ENCODE measurements at regions of chr4 and their contacts with region 1.

Region 1: DNA sequence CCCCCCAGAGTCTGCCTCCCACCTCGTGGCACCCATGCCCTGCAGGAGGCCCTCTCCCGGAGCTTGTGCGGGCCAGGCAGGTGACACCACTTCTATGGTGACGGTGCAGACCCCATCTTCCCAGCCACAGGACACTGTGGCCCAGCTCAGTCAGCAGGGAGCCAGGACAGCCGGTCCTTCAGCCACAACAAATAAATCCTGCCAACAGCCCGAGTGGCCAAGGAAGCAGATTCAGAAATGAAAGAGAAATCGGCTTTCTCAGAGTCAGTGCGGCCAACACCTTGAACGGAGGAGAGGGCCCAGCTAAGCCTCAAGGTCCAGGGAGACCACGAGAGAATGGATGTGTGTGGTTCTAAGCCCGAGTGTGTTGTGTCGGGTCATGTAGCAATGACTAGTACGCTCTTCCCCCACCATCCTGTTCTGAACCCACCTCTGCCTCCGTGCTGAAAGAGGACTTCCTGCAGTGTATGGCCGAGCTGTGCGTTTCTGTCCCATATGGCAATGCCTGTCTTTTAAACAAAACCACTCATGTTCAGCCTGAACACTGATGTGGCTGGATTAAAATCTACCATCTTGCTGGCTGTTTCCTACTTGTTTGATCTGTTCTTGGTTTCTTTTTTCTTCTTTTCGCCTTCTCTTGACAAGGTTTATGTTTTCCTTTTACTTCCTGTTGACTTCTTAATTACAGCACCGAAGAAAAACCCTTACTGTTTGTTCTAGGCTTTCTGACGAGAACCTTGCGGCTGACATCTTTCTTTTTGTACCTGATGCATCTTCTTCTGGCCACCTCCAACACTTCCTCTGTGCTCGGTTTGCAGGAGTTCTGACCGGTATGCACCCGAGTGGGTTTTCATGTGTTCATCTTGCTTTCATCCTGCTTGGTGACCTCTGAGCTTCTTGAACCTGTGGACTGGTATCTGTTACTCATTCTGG is 53.1 kb downstream of the GAK start:
- DNase-seq: no peak
- H3K4me3 ChIP-seq: no peak overlapping the region
- H3K27ac ChIP-seq: no peak overlapping the region
- H3K4me1 ChIP-seq: no peaks in the 10 kb centered on the region
- H3K27me3 ChIP-seq: no peaks in the 10 kb centered on the region
- CTCF ChIP-seq: no peak
- EP300 ChIP-seq: no peak
- POLR2A ChIP-seq: no peak

Region 2: DNA sequence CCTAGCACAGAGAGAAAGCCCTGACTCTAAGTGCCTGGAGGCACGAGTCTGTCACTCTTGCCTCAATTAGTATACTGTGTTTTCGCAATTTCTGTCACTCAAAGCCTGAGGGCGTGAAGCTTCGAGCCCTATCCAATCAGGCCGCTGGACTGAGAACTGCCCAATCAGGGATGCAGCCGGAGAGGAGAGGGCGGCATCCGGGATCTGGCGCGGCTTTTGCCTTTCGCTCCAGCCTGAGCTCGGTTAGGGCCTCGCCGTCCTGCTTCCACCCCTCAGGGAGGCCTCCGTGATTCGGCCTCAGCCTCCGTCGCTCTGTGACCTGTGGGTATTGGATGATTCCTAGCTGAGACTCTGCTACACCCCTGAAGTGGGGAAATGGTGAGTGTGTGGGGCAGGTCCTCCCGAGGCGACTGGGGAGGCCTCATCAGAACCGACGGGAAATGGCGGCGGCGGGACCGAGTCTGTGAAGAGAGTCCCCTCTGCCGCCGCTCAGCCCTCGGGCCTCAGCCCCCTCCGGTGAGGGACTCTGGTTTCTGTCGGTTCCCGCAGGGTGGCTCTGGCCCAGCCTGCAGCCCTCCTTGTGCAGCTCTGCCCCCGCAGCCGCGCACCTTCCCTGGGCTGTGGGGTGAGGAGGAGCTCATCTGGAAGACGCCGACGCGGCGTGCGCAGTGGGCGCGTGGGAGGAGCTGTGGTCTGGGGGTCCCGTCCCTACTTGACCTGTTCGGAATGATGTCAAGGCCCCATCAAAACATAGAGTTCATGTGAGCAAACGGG is 492.9 kb before region 1 on chr4:
- intact Hi-C with region 1: no loop called
- DNase-seq: no peak
- H3K4me3 ChIP-seq: no peak overlapping the region
- H3K27ac ChIP-seq: no peak overlapping the region
- H3K4me1 ChIP-seq: no peaks in the 10 kb centered on the region
- H3K27me3 ChIP-seq: no peaks in the 10 kb centered on the region
- CTCF ChIP-seq: no peak
- EP300 ChIP-seq: no peak
- POLR2A ChIP-seq: no peak

Region 3: DNA sequence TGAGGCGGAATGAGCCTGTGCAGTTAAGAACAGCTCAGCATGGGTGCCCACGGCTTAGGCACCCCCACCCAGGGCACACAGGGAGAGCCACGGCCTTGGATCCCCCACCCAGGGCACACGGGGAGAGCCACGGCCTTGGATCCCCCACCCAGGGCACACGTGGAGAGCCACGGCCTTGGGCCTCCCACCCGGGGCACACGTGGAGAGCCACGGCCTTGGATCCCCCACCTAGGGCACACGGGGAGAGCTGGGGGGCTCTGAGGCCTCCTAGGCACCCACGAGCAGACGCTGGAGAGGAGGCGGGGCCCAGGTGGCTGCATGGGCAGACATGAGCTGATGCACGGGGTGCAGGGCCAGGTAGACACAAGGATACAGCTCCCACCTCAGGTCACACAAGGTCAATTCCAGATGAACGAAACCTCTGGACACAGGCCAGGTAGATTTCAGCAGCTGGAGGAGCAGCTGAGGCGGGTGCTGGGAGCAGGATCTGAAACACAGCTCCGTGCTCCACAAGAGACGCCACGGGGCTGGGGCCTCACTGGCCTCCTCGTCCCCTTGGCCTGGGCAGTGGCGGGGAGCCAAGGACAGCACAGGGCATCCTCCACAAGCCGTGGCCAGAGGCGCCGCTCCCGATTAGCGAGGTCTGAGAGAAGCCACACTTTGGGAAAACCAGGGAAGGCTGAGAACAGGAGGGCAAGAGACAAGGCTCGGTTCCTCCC is 22.3 kb after region 1 on chr4:
- intact Hi-C with region 1: loop called in 1 of 4 experiments (anchors 1 kb)
- DNase-seq: no peak
- H3K4me3 ChIP-seq: no peak overlapping the region
- H3K27ac ChIP-seq: no peak overlapping the region
- H3K4me1 ChIP-seq: no peaks in the 10 kb centered on the region
- H3K27me3 ChIP-seq: no peaks in the 10 kb centered on the region
- CTCF ChIP-seq: no peak
- EP300 ChIP-seq: no peak
- POLR2A ChIP-seq: no peak

Measured in ovary (tissue), 10 donors.